IMR-90 (cell line): ENCODE measurements at regions of chr15 and their contacts with region 1.

Region 1: DNA sequence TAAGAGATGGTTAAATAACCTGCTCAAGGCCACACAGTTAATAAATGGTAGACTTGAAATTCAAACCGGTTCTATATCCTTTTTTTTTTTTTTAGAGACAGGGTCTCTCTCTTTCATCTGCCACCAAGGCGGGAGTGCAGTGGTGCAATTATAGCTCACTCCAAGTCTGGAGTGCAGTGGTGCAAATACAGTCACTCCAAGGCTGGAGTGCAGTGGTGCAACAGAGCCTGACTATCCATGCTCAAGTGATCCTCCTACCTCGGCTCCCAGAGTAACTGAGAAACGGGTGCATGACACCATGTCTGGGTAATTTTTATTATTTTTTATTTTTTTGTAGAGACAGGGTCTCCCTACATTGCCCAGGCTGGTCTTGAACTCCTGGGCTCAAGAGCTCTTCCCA is 23.4 kb downstream of the DPP8 start:
- DNase-seq: no peak
- ATAC-seq: no peak
- H3K4me3 ChIP-seq: no peak overlapping the region
- H3K27ac ChIP-seq: no peak overlapping the region
- H3K4me1 ChIP-seq: no peaks in the 10 kb centered on the region
- H3K27me3 ChIP-seq: no peaks in the 10 kb centered on the region
- CTCF ChIP-seq: no peak
- POLR2A ChIP-seq: no peak
- RAD21 ChIP-seq: no peak

Region 2: DNA sequence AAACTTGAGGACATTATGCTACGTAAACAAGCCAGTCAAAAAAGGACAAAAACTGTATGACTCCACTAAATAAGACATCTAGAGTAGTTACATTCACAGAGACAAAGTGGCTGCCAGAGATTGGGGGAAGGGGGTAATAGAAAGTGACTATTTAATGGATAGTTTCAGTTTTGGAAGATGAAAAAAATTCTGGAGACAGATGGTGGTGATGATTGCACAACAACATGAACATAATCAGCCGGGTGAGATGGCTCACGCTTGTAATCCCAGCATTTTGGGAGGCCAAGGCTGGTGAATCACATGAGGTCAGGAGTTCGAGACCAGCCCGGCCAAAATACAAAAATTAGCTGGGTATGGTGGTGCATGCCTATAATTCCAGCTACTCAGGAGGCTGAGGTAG is 17.2 kb before region 1 on chr15:
- CTCF ChIA-PET with region 1: interaction called, 6 read pairs
- POLR2A ChIA-PET with region 1: interaction called, 16 read pairs
- dilution Hi-C with region 1: no loop called
- in situ Hi-C with region 1: no loop called
- intact Hi-C with region 1: no loop called
- DNase-seq: peak; percentile 90
- ATAC-seq: peak; percentile 85
- H3K4me3 ChIP-seq: no peak overlapping the region
- H3K27ac ChIP-seq: no peak overlapping the region; the same call in 1 of the 2 replicates
- H3K4me1 ChIP-seq: no peaks in the 10 kb centered on the region
- H3K27me3 ChIP-seq: no peaks in the 10 kb centered on the region
- CTCF ChIP-seq: no peak
- POLR2A ChIP-seq: no peak
- RAD21 ChIP-seq: no peak

Region 3: DNA sequence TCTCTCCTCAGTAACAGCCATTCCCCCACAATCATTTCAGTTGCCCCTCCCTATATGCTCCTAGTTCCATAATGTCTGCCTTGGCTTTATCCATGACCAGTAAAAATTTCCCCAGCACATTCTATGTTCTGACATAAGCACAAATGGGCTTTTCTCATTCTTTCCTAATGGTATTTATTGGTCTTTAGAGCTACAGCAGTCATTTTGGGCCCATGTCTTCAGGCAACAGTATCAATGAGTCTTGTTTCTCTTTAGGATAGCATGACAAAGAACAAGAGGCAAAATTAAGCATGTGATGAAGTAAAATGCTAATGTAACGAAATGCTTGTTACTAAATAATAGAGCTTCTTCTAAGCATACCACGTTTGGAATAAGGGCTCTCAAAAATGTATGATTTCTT is 15.2 kb after region 1 on chr15:
- CTCF ChIA-PET with region 1: no interaction called
- POLR2A ChIA-PET with region 1: no interaction called
- dilution Hi-C with region 1: no loop called
- in situ Hi-C with region 1: no loop called
- intact Hi-C with region 1: no loop called
- DNase-seq: no peak
- ATAC-seq: no peak
- H3K4me3 ChIP-seq: no peak overlapping the region
- H3K27ac ChIP-seq: no peak overlapping the region
- H3K4me1 ChIP-seq: no peaks in the 10 kb centered on the region
- H3K27me3 ChIP-seq: no peaks in the 10 kb centered on the region
- CTCF ChIP-seq: no peak
- POLR2A ChIP-seq: no peak
- RAD21 ChIP-seq: no peak